Dendritic cell treated with granulocyte-macrophage colony-stimulating factor and Interleukin-4, amounts not matched to agents 40 ng/mL and 50 ng/mL, for 4 days (primary cell): ENCODE measurements at regions of chrX and their contacts with region 1.

Region 1: DNA sequence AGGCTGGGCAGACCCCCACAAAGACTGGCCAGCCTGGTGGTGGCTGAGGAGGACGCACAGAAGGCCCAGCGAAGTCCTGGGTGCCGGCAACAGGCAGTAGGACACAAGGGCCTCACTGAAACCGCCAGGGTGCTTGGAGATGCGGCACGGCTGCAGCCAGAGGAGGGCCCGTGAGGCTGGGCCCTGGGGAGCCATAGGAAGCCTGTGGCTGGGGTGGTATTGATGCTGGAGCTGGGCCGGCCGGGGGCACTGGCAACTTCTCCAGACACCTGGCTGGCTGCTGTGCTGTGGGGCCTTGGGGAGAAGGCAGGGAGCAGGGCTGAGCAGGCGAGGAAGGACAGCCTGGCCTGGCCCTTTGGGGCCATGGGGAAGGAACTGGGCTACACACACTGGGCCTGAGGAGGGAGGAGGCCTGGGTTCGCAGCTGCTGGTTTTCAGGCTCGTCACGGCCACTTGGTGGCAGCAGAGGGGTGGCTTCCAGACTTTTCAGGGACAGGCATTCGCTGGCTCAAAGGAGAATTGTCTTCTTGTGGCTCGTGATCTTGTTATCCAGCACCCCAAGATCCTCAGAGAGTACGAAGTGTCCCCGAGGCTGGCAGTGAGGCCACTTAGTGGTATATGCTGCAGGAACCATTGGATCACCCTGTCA is 37.2 kb downstream of the ATP2B3 start:
- H3K4me3 Mint-ChIP-seq: no peak overlapping the region
- H3K27ac Mint-ChIP-seq: no peak overlapping the region
- H3K4me1 Mint-ChIP-seq: peaks cover 8% of the 10 kb centered on the region
- H3K27me3 Mint-ChIP-seq: peaks cover 19% of the 10 kb centered on the region

Region 2: GRCh38 chrX:153517423-153517822 is 37.2 kb before region 1 on chrX and contains the start of gene ATP2B3:
- intact Hi-C with region 1: no loop called
- H3K4me3 Mint-ChIP-seq: no peak within 1 kb of the TSS
- H3K27ac Mint-ChIP-seq: no peak within 1 kb of the TSS
- H3K4me1 Mint-ChIP-seq: no peaks in the 10 kb centered on the region
- H3K27me3 Mint-ChIP-seq: peaks cover 52% of the 10 kb centered on the region

Region 3: DNA sequence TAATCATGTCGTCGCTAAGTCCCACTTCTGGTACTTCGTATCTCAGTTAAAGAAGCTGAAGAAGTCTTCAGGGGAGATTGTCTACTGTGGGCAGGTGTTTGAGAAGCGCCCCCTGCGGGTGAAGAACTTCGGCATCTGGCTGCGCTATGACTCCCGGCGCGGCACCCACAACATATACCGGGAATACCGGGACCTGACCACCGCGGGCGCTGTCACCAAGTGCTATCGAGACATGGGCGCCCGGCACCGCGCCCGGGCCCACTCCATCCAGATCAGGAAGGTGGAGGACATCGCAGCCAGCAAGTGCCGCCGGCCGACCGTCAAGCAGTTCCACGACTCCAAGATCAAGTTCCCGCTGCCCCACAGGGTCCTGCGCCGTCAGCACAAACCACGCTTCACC is 107.6 kb after region 1 on chrX:
- intact Hi-C with region 1: loop called (anchors 5 kb)
- H3K4me3 Mint-ChIP-seq: peak overlapping the region; percentile 52
- H3K27ac Mint-ChIP-seq: no peak overlapping the region
- H3K4me1 Mint-ChIP-seq: no peaks in the 10 kb centered on the region
- H3K27me3 Mint-ChIP-seq: peaks cover 59% of the 10 kb centered on the region